GM10248 (cell line): ENCODE measurements at regions of chr5 and their contacts with region 1.

Region 1: DNA sequence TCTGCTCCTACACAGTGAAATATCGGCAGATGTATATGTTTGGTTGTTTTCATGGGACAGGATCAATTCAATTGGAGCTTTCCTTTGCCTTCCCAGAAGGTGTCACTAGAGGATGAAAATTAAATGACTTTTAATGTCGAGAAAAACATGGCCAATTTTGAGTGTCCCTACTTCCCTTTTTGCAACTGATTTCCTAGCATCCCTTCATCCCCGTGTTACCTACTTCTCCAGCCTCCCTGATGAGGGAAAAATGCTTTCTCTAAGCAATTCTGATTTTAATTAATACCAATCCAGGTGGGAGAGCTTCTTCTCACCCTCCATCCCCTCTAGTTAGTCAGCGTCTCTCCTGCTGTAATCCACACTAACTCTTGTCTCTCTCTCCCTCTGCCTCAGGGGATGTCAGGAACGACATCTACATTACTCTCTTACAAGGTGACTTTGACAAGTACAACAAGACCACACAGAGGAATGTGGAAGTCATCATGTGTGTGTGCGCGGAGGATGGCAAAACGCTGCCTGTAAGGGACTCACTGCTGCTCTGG is 64.9 kb downstream of the DOCK2 start:
- DNase-seq: no peak
- CTCF ChIP-seq: peak; percentile 46

Region 2: GRCh38 chr5:169682026-169682425 is 20.0 kb before region 1 on chr5:
- CTCF ChIA-PET with region 1: interaction called, 11 read pairs
- POLR2A ChIA-PET with region 1: no interaction called
- DNase-seq: no peak
- CTCF ChIP-seq: no peak

Region 3: DNA sequence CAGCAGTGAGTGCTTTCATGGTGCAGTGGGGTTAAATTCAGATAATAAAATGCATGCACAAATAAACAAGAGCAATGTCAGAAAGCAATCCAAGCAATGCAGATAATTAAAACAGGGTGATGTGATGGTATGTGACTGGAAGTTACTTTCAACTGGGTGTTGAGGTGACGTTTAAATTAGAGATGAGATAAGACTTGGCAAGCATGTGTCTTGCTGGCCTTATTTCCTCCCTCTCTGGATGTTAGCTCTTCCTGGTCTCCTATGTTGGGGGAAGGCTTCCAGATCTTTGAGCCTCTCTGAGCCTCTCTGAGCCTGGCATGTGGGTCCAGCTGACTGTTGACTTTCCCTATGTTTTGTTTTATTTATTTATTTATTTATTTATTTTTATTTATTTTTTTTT is 10.5 kb before region 1 on chr5:
- CTCF ChIA-PET with region 1: interaction called, 10 read pairs
- POLR2A ChIA-PET with region 1: no interaction called
- DNase-seq: no peak
- CTCF ChIP-seq: no peak

Region 4: GRCh38 chr5:169980418-169981053 is 278.6 kb after region 1 on chr5 and contains the start of gene INSYN2B:
- CTCF ChIA-PET with region 1: interaction called, 16 read pairs
- POLR2A ChIA-PET with region 1: no interaction called
- DNase-seq: peak; percentile 31
- CTCF ChIP-seq: peak; percentile 40